ENCODE measurements at regions of chr11 and their contacts with region 1.

Region 1: DNA sequence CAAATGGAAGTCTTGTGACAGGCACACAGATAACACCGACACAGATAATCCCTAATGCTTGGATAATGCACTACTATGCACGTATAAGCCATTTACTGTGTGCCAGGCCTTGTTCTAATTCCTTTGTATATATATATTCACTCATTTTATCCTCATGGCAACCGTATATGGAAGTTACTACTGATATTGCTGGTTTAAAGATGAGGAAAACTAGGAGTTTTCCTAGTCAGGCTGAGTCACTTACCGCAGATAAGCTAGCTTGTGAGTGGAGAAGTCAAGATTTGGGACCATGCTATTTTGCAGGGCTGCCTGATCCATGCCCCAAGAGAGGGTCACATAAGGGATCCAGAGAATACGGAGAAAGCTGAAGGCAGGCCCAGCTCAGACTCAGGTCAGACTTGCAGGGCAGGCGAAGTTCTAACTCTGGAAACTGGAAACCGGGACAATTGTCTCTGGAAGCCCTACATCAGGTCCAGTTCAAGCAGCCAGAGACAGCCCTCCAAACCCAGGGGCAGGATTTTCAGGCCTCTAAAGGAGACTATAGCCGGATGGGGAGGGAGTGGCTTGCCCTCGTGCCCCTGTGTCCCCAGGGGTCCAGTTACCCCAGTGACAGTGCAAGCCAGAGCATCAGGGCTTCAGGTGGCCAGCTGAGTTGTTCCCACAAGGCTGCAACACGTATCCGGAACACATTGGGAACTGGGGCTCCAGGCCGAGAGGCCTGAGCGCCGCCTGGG is 534.8 kb downstream of the INSC start:
- DNase-seq: no peak
- H3K4me3 ChIP-seq: peak overlapping the region in 1 of 8 donors; percentile 33
- H3K27ac ChIP-seq: peak overlapping the region in 6 of 8 donors; percentile 40 to 83 (median 58)
- H3K4me1 ChIP-seq: peaks cover 0 to 19% (median 14%) of the 10 kb centered on the region in 6 donors
- H3K27me3 ChIP-seq: peaks cover 0 to 26% (median 10%) of the 10 kb centered on the region in 7 donors
- CTCF ChIP-seq: no peak
- POLR2A ChIP-seq: no peak

Region 2: DNA sequence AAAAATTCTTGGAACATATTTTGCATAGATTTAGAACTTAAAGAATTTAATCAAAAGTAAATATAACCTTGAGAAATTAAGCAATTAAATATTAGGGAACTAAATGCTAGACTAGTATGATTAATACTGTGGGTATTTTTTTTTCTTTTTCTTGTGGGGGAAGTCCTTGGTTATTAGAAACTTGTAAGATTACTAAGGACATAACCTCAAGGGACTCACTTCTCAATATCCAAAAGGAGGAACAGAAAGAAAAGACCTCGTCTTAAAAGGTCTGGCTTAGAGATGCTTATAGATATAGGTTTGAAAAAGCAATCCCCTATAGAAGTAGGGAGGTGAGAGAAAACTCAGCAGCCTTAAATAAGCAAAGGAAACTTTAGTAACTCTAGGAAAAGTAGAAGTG is 166.3 kb before region 1 on chr11:
- intact Hi-C with region 1: no loop called
- DNase-seq: no peak
- H3K4me3 ChIP-seq: no peak overlapping the region
- H3K27ac ChIP-seq: no peak overlapping the region
- H3K4me1 ChIP-seq: no peaks in the 10 kb centered on the region
- H3K27me3 ChIP-seq: no peaks in the 10 kb centered on the region
- CTCF ChIP-seq: no peak
- POLR2A ChIP-seq: no peak

Region 3: GRCh38 chr11:15707971-15708370 is 58.4 kb after region 1 on chr11:
- intact Hi-C with region 1: no loop called
- DNase-seq: no peak
- H3K4me3 ChIP-seq: no peak overlapping the region
- H3K27ac ChIP-seq: no peak overlapping the region
- H3K4me1 ChIP-seq: no peaks in the 10 kb centered on the region
- H3K27me3 ChIP-seq: no peaks in the 10 kb centered on the region
- CTCF ChIP-seq: no peak
- POLR2A ChIP-seq: no peak

Region 4: GRCh38 chr11:15819679-15820286 is 170.2 kb after region 1 on chr11:
- intact Hi-C with region 1: loop called (anchors 10 kb)
- DNase-seq: peak; percentile 88
- H3K4me3 ChIP-seq: no peak overlapping the region
- H3K27ac ChIP-seq: no peak overlapping the region
- H3K4me1 ChIP-seq: peaks cover 0 to 25% (median 6%) of the 10 kb centered on the region in 6 donors
- H3K27me3 ChIP-seq: no peaks in the 10 kb centered on the region
- CTCF ChIP-seq: peak in 9 of 11 experiments; percentile 52 to 84 (median 71)
- POLR2A ChIP-seq: no peak

Region 5: DNA sequence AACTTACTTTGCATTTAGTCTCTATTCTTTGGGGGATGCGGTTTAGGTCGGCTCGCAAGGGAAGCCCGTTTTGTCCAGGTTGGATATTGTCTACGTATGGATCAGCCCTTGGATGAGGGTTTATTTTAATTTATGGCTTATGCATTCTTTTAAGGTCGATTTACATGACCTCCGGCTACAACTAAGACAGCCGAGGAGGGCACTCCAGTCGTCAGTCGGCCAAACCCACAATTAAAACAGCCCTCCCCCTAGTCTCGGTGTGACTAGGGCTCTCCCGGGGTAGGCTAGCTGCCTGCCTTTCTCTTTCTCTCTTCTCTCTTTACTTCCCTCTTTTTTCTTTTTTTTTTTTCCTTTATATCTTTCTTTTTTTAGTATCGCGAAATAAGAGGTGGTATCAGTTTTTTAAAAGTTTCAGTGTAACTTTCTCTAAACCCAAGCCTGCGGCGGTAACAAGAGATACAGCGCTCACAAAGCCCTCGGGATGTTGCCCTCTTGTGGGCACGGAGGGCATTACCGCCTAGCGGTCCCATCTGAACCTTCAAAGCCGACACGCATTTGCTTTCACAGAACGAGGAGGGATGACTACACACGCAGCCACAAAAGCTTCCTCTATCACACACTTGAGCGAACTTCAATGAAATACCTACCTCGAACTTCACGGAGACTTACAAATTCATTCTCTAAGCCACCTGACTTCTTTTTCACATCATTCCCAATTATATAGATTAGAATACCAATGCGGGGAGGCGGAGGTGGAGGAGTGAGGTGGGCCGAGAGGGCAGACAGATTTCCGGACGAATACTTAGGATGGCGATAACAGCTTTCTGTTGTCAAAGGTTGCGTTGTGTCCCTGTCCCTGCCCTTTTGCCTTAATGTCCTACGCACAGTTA is 956.6 kb after region 1 on chr11:
- intact Hi-C with region 1: loop called (anchors 10 kb)
- DNase-seq: peak; percentile 92
- H3K4me3 ChIP-seq: peak overlapping the region; percentile 27 to 71 (median 40)
- H3K27ac ChIP-seq: peak overlapping the region; percentile 68 to 87 (median 82)
- H3K4me1 ChIP-seq: peaks cover 3 to 46% (median 39%) of the 10 kb centered on the region in 6 donors
- H3K27me3 ChIP-seq: peaks cover 4 to 99% (median 80%) of the 10 kb centered on the region in 7 donors
- CTCF ChIP-seq: peak; percentile 86 to 94 (median 92)
- POLR2A ChIP-seq: no peak